ENCODE measurements at regions of chr18 and their contacts with region 1.

Region 1: GRCh38 chr18:79644006-79644665 is 35.5 kb upstream of the CTDP1 start:
- DNase-seq: peak; percentile 38
- H3K4me3 ChIP-seq: no peak overlapping the region
- H3K27ac ChIP-seq: no peak overlapping the region
- H3K4me1 ChIP-seq: no peaks in the 10 kb centered on the region
- H3K27me3 ChIP-seq: no peaks in the 10 kb centered on the region
- CTCF ChIP-seq: peak; percentile 84 to 92 (median 91)
- POLR2A ChIP-seq: no peak

Region 2: GRCh38 chr18:79378542-79379250 is 265.4 kb before region 1 on chr18:
- intact Hi-C with region 1: loop called (anchors 2 kb)
- DNase-seq: peak; percentile 74
- H3K4me3 ChIP-seq: no peak overlapping the region
- H3K27ac ChIP-seq: no peak overlapping the region
- H3K4me1 ChIP-seq: no peaks in the 10 kb centered on the region
- H3K27me3 ChIP-seq: no peaks in the 10 kb centered on the region
- CTCF ChIP-seq: peak; percentile 85 to 97 (median 95)
- POLR2A ChIP-seq: no peak

Region 3: DNA sequence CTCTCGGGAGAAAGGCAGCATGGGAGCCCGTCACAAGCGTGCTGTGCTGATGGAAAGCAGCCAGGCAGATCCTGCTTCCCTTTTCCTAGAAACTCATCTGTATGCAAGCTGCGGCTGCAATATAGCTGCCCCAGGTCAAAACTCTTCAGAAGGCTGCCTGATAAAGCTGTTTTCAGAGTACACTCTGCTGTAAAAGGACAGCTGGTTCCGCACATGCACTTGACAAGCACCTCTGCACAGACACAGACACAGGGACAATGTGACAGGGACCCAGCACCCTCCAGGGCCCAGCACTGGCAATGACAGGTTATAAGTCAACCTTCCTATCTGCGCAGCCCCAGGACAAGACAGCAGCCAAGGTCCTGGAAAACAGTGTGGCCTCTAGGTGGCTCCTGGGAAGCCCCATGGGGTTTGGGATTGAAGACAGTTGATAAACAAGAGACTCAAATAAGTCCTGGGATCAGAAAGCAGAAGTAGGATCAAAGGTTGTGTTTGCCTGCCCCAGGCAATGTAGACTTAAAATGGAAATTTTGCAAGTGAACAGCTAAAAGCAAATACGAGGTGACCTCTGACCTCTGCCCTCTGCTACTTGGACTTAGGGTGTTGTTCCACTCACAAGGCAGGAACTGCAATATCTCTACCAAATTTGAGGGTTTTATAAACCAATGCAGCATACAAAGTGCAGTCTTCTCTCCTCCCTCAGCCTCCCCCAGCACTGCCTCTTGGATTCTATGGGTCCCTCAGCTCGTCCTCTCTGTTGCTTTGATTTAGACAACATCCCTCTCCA is 290.4 kb after region 1 on chr18:
- intact Hi-C with region 1: no loop called
- DNase-seq: no peak
- H3K4me3 ChIP-seq: no peak overlapping the region
- H3K27ac ChIP-seq: no peak overlapping the region
- H3K4me1 ChIP-seq: no peaks in the 10 kb centered on the region
- H3K27me3 ChIP-seq: no peaks in the 10 kb centered on the region
- CTCF ChIP-seq: no peak
- POLR2A ChIP-seq: no peak

Measured in prostate gland (tissue), 2 donors.